IMR-90 (cell line): ENCODE measurements at regions of chr1 and their contacts with region 1.

Region 1: DNA sequence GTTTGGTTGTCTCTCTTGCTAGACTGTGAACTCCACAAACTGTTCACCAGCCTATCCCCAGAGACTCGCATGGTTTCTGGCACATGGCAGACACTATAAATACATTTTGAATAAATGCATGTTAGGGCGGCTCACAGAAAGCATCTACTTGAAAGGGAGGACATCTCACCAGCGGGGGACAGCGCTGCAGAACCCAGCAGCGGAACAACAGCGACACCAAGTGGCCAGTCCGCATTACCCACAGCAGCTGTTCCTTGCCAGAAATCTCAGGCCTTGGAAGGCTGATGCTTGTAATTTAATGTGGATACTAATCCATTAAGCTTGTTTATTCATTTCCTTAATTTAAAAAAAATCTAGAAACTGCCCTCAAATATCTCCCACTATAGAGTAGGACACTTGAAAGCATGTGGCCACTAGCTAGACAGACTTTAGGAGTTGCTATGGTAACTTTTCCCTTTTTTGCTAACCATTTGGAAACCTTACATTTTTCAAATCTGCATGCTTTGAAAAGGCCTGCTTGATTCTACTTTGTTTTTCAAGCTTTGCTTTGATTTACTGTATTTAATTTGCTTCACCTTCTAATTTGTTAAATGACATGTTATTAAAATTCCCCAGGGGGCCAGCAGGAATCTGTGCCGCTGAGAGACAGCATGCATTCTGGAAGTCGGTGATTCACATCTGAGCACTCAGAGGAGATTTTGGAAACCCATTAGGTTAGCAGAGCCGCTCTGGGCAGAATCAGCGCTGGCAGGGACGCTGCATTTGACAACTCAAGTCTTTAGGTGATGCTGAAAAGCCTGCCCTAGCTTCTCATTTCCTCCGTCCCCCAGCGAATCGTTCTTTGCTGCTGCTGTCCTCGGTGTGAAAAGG is 63.5 kb upstream of the SSX2IP start:
- DNase-seq: peak; percentile 78
- ATAC-seq: peak; percentile 92
- H3K4me3 ChIP-seq: no peak overlapping the region
- H3K27ac ChIP-seq: no peak overlapping the region
- H3K4me1 ChIP-seq: peaks cover 5% of the 10 kb centered on the region; the same call in 1 of the 2 replicates
- H3K27me3 ChIP-seq: no peaks in the 10 kb centered on the region
- CTCF ChIP-seq: peak; percentile 98
- POLR2A ChIP-seq: peak; percentile 57; the same call in 1 of the 2 replicates
- RAD21 ChIP-seq: peak; percentile 100

Region 2: DNA sequence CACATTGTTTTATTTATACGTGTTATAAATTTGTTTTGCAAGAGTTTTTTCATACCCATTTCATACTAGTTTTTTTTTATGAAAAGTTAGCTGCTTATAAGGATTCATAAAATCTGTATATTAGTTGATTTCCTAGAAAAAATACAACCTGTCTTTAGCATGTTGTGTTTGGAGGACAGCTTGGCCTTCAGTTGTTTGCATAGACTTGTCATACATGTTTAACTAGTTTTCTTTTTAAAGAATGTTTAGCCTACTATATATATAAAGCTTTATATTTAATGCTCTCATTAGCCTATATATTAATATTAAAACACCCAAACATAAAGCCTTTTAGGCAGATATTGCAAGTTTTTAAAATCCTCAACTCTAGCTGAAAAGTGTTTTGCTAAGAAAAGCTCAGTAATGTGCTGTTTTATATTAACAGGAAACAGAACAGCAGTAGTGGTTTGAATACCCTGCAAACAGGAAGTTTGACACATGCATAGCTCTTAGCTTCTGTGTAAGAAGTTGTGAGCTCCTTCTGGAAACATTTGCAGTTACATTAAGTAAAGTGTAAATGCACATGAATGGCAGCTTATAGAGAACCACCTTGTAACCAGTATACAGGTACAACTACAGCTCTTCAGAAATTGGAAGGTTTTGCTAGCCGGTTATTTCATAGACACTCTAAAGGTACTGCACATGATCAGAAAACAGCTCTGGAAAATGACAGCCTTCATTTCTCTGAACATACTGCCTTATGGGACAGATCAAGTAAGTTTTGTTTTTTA is 609.8 kb before region 1 on chr1 and contains the start of gene PRKACB:
- CTCF ChIA-PET with region 1: no interaction called
- POLR2A ChIA-PET with region 1: no interaction called
- dilution Hi-C with region 1: no loop called
- in situ Hi-C with region 1: no loop called
- intact Hi-C with region 1: loop called (anchors 2 kb)
- DNase-seq: peak; percentile 62
- ATAC-seq: peak; percentile 68
- H3K4me3 ChIP-seq: no peak within 1 kb of the TSS
- H3K27ac ChIP-seq: no peak within 1 kb of the TSS
- H3K4me1 ChIP-seq: peaks cover 5% of the 10 kb centered on the region
- H3K27me3 ChIP-seq: no peaks in the 10 kb centered on the region
- CTCF ChIP-seq: no peak
- POLR2A ChIP-seq: no peak
- RAD21 ChIP-seq: no peak
- total RNA-seq, gene PRKACB: 8.2 and 14.2 TPM in 2 replicates

Region 3: DNA sequence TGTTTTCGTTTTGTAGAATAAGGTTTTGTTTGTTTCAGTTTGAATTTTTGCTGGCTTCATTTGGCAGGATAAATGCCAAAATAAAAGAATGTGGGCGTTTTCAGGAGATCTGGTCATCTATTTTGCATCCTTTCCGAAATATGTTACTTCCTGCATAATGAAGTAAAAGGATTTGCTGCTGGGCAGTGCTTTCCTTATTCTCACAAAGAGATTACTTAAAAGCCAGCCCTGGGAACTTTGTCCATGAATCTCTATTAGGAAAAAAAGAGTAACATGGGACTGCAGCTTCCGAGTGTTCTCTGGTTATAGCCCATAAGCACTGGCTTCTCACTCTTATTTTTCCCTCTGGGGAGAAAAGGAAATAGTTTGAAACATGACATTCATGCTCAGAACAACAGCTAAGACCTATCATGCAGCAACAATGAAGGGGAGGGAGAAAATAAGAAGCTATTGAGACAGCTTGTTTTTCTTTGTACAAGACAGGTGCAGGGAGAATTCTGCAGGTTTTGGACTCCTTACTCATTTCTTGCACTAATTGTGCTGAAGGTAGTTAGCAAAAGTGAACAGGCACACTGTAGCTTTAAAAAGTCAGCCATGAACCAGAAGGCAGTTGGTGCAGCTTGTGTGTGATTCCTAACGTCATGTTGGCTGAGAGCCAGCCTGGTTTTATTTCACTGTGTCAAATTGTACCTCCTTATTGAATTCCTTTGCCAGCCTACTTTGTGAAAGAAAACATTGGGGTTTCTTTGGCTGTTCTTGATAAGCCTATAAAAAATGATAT is 452.6 kb before region 1 on chr1 and contains the start of gene SAMD13:
- CTCF ChIA-PET with region 1: no interaction called
- POLR2A ChIA-PET with region 1: no interaction called
- dilution Hi-C with region 1: no loop called
- in situ Hi-C with region 1: no loop called
- intact Hi-C with region 1: loop called (anchors 10 kb)
- DNase-seq: peak; percentile 69
- ATAC-seq: no peak
- H3K4me3 ChIP-seq: peak within 1 kb of the TSS; percentile 51; the same call in 1 of the 2 replicates
- H3K27ac ChIP-seq: peak within 1 kb of the TSS; percentile 87
- H3K4me1 ChIP-seq: peaks cover 17% of the 10 kb centered on the region
- H3K27me3 ChIP-seq: no peaks in the 10 kb centered on the region
- CTCF ChIP-seq: no peak
- POLR2A ChIP-seq: no peak
- RAD21 ChIP-seq: no peak
- total RNA-seq, gene SAMD13: 0.36 and 0.56 TPM in 2 replicates

Region 4: DNA sequence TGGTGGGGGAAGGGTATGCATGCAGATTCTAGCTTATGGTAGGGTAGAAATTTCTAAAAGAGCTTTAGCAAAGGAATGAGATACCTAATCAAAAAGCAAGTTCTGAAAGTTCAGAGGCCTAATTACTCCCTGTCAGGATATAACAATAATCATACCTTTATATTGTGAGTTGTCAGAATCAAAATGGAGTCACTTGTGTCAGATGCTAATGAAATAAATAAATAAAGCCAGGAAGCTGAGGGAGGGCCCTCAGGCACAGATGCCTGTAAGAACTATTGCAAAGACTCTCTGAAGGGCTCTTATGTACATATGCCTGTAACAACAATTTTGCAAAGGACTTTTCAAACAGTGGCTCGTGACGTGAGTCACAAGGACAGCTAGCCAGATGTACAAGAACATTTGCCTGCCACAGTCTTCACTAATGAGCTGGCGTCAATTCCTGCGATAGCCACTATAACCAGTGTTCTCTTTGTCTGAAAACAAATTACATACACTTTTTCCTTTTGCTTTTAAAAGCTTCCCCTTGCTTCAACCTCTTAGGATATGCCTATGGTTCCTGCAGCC is 382.8 kb before region 1 on chr1:
- CTCF ChIA-PET with region 1: no interaction called
- POLR2A ChIA-PET with region 1: no interaction called
- dilution Hi-C with region 1: no loop called
- in situ Hi-C with region 1: no loop called
- intact Hi-C with region 1: no loop called
- DNase-seq: peak; percentile 88
- ATAC-seq: peak; percentile 67
- H3K4me3 ChIP-seq: no peak overlapping the region
- H3K27ac ChIP-seq: no peak overlapping the region
- H3K4me1 ChIP-seq: peaks cover 7% of the 10 kb centered on the region
- H3K27me3 ChIP-seq: no peaks in the 10 kb centered on the region
- CTCF ChIP-seq: no peak
- POLR2A ChIP-seq: no peak
- RAD21 ChIP-seq: no peak

Region 5: GRCh38 chr1:84442256-84442655 is 311.5 kb before region 1 on chr1:
- CTCF ChIA-PET with region 1: interaction called, 7 read pairs
- POLR2A ChIA-PET with region 1: no interaction called
- dilution Hi-C with region 1: no loop called
- in situ Hi-C with region 1: loop called (anchors 25 kb)
- intact Hi-C with region 1: loop called (anchors 1 kb)
- DNase-seq: peak; percentile 94
- ATAC-seq: peak; percentile 96
- H3K4me3 ChIP-seq: no peak overlapping the region
- H3K27ac ChIP-seq: no peak overlapping the region
- H3K4me1 ChIP-seq: 0 out of 2 replicates have a peak, but pooled peaks cover 2% of the 10 kb centered on the region
- H3K27me3 ChIP-seq: no peaks in the 10 kb centered on the region
- CTCF ChIP-seq: peak; percentile 82
- POLR2A ChIP-seq: no peak
- RAD21 ChIP-seq: peak; percentile 89

Region 6: DNA sequence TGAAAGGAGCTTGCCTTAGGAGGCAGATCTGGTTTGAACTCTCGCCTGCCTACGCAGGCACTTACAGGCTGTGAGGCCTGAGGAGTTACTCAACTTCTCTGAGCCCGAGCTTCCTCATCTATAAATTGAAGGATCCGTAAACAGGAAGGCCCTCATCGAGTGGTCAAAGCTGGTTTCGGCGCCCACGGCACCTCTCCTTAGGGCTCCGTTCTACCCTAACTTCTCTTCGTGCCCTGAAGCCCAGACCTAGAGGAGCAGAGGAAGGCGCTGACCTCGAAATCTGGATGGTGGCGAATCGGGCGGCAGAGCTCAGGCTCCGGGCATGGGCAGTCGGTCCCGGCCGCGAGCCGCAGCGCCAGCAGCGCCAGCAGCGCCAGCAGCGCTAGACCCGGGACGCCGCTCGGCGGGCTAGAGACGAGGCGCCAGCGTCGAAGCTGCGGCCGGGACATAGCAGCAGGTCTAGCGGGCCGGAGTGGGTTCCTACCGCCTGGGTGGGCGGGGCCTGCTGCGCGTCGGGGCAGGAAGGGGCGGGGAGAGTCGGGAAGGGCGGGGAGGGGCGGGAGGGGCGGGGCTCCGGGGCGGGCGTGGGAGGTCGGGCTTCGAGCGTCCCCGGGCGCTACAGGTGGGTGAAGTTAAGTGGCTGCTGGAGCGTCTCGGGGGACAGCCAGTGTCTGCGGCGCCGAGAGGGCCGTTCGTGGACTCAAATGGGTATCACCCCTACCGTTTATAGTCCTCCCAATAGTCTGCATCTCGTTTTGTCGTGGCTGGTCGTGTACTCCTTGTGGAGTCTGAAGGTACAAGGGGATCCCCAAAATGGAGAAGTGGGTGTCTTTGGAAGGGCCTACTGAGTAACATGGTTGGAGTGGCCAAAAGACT is 179.5 kb before region 1 on chr1 and contains the start of gene CTBS:
- CTCF ChIA-PET with region 1: no interaction called
- POLR2A ChIA-PET with region 1: interaction called, 3 read pairs
- dilution Hi-C with region 1: no loop called
- in situ Hi-C with region 1: no loop called
- intact Hi-C with region 1: loop called (anchors 5 kb)
- DNase-seq: peak; percentile 88
- ATAC-seq: peak; percentile 98
- H3K4me3 ChIP-seq: peak within 1 kb of the TSS; percentile 94
- H3K27ac ChIP-seq: peak within 1 kb of the TSS; percentile 97
- H3K4me1 ChIP-seq: peaks cover 2% of the 10 kb centered on the region; the same call in 1 of the 2 replicates
- H3K27me3 ChIP-seq: no peaks in the 10 kb centered on the region
- CTCF ChIP-seq: no peak
- POLR2A ChIP-seq: peak; percentile 85
- RAD21 ChIP-seq: 0 out of 2 replicates have a peak, but pooled peaks have one; percentile 3
- total RNA-seq, gene CTBS: 5.9 and 8.1 TPM in 2 replicates

Region 7: DNA sequence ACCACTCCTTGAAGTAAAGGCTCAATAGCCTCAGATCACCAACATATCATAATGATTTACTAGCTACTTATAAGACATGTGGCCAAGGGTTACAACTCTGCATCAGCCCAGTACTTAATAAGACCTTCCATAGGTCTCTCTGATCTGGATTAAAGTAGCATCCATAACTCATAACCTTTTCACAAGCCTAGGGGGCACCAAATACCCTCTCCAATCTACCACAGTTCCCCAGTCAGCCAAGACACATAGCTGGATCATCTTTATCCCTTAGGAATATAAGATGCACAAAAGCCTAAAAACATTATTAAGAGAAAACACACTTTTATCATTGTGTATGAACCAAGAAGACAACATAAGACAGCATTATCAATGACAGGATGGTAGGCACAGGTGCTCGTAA is 85.6 kb before region 1 on chr1:
- CTCF ChIA-PET with region 1: no interaction called
- POLR2A ChIA-PET with region 1: no interaction called
- dilution Hi-C with region 1: no loop called
- in situ Hi-C with region 1: no loop called
- intact Hi-C with region 1: loop called (anchors 5 kb)
- DNase-seq: no peak
- ATAC-seq: no peak
- H3K4me3 ChIP-seq: no peak overlapping the region
- H3K27ac ChIP-seq: no peak overlapping the region
- H3K4me1 ChIP-seq: no peaks in the 10 kb centered on the region
- H3K27me3 ChIP-seq: no peaks in the 10 kb centered on the region
- CTCF ChIP-seq: 0 out of 2 replicates have a peak, but pooled peaks have one; percentile 14
- POLR2A ChIP-seq: no peak
- RAD21 ChIP-seq: peak; percentile 31; the same call in 1 of the 2 replicates

Region 8: GRCh38 chr1:84936116-84936810 is 182.5 kb after region 1 on chr1:
- CTCF ChIA-PET with region 1: interaction called, 5 read pairs
- POLR2A ChIA-PET with region 1: no interaction called
- dilution Hi-C with region 1: no loop called
- in situ Hi-C with region 1: no loop called
- intact Hi-C with region 1: loop called (anchors 1 kb)
- DNase-seq: peak; percentile 72
- ATAC-seq: peak; percentile 92
- H3K4me3 ChIP-seq: no peak overlapping the region
- H3K27ac ChIP-seq: no peak overlapping the region
- H3K4me1 ChIP-seq: peaks cover 2% of the 10 kb centered on the region; the same call in 1 of the 2 replicates
- H3K27me3 ChIP-seq: peaks cover 12% of the 10 kb centered on the region
- CTCF ChIP-seq: peak; percentile 95
- POLR2A ChIP-seq: no peak
- RAD21 ChIP-seq: peak; percentile 96